Natural killer cell (primary cell): ENCODE measurements at regions of chr13 and their contacts with region 1.

Region 1: DNA sequence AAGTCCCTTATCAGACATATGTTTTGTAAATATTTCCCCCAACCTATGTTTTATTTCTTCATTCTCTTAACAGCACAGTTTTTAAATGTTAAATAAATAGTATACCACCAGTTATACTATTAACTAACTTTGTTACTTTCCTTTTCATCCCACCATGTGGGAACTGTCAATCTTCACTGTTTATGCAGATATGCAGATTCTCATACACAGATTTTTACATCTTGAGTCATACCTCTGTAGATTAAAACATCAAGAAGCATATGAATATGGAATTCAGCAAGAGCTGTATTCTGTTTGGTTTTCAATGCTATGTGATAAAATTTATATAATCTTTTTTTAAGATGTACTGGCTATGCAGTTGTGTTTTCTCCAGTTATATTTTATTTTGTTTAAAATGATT is 566.3 kb downstream of the LIG4 start:
- DNase-seq: no peak
- ATAC-seq: no peak
- H3K4me3 ChIP-seq: no peak overlapping the region
- H3K4me3 Mint-ChIP-seq: no peak overlapping the region
- H3K27ac ChIP-seq: no peak overlapping the region
- H3K27ac Mint-ChIP-seq: no peak overlapping the region
- H3K4me1 ChIP-seq: no peaks in the 10 kb centered on the region
- H3K4me1 Mint-ChIP-seq: no peaks in the 10 kb centered on the region
- H3K27me3 ChIP-seq: no peaks in the 10 kb centered on the region
- H3K27me3 Mint-ChIP-seq: no peaks in the 10 kb centered on the region
- CTCF ChIP-seq: no peak

Region 2: DNA sequence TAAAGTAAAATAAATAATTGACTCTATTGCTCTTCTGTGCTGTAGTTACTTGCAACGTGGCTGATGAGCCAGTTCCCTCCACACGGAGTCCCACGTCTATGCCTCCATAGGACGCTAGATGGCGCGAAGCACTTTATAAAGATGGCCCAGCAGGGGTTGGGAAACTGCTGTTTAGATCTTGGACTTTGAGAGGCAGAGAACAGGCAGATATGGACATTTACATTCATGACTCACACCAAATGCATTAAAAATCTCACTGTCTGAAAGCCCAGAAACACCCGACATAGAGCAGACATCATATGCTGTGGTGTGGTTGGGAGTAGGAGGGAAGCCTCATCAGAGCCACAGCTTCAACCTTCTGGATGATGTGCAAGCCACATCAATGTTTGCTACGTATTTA is 438.0 kb before region 1 on chr13:
- intact Hi-C with region 1: loop called (anchors 2 kb)
- DNase-seq: peak in 1 of 2 donors; percentile 49
- ATAC-seq: peak; percentile 52 to 69 (median 63)
- H3K4me3 ChIP-seq: no peak overlapping the region
- H3K4me3 Mint-ChIP-seq: no peak overlapping the region
- H3K27ac ChIP-seq: no peak overlapping the region
- H3K27ac Mint-ChIP-seq: no peak overlapping the region
- H3K4me1 ChIP-seq: no peaks in the 10 kb centered on the region
- H3K4me1 Mint-ChIP-seq: no peaks in the 10 kb centered on the region
- H3K27me3 ChIP-seq: no peaks in the 10 kb centered on the region
- H3K27me3 Mint-ChIP-seq: no peaks in the 10 kb centered on the region
- CTCF ChIP-seq: peak; percentile 42

Region 3: GRCh38 chr13:107373551-107373950 is 275.5 kb before region 1 on chr13:
- intact Hi-C with region 1: loop called (anchors 2 kb)
- DNase-seq: no peak
- ATAC-seq: no peak
- H3K4me3 ChIP-seq: no peak overlapping the region
- H3K4me3 Mint-ChIP-seq: no peak overlapping the region
- H3K27ac ChIP-seq: no peak overlapping the region
- H3K27ac Mint-ChIP-seq: no peak overlapping the region
- H3K4me1 ChIP-seq: no peaks in the 10 kb centered on the region
- H3K4me1 Mint-ChIP-seq: no peaks in the 10 kb centered on the region
- H3K27me3 ChIP-seq: no peaks in the 10 kb centered on the region
- H3K27me3 Mint-ChIP-seq: no peaks in the 10 kb centered on the region
- CTCF ChIP-seq: no peak

Region 4: DNA sequence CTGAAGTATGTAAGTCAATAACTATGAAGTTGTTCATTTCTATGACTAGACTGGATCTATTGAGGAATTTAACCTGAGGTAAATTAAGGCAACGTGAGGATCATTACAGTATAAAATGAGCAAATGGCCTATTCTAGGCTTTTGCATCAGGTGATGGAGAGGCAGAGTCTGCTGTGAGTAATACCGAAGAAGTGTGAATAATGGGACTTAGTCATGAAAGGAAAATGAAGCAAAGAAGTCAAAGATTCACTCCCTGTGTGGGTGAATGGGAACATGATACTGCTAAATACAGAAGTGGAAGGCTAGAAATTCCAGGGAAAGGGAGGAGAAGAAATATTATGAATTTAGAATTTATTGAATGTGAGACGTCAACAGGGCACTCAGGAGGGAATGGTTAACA is 207.8 kb before region 1 on chr13:
- intact Hi-C with region 1: no loop called
- DNase-seq: no peak
- ATAC-seq: no peak
- H3K4me3 ChIP-seq: no peak overlapping the region
- H3K4me3 Mint-ChIP-seq: no peak overlapping the region
- H3K27ac ChIP-seq: no peak overlapping the region
- H3K27ac Mint-ChIP-seq: no peak overlapping the region
- H3K4me1 ChIP-seq: no peaks in the 10 kb centered on the region
- H3K4me1 Mint-ChIP-seq: no peaks in the 10 kb centered on the region
- H3K27me3 ChIP-seq: no peaks in the 10 kb centered on the region
- H3K27me3 Mint-ChIP-seq: no peaks in the 10 kb centered on the region
- CTCF ChIP-seq: no peak

Region 5: DNA sequence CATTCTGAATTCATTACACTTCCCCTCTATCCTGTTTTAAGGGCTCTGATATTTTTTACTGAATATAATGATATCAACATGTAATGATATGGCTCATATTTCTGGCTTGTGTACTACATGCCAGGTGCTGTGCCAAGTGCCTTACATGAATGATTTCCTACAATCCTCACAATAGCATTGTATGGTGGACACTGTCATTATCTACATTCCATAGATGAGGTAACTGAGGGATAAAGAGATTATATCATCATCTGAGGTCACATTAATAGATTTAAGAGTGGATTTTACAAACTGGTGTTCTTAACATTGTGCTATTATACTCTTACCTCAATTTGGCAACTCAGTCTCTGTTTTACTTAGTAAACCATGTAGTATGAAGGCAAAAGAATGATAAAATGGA is 64.2 kb after region 1 on chr13:
- intact Hi-C with region 1: no loop called
- DNase-seq: no peak
- ATAC-seq: no peak
- H3K4me3 ChIP-seq: no peak overlapping the region
- H3K4me3 Mint-ChIP-seq: no peak overlapping the region
- H3K27ac ChIP-seq: no peak overlapping the region
- H3K27ac Mint-ChIP-seq: no peak overlapping the region
- H3K4me1 ChIP-seq: no peaks in the 10 kb centered on the region
- H3K4me1 Mint-ChIP-seq: no peaks in the 10 kb centered on the region
- H3K27me3 ChIP-seq: no peaks in the 10 kb centered on the region
- H3K27me3 Mint-ChIP-seq: no peaks in the 10 kb centered on the region
- CTCF ChIP-seq: no peak